Heart left ventricle (tissue), 16 donors: ENCODE measurements at regions of chr1 and their contacts with region 1.

Region 1: DNA sequence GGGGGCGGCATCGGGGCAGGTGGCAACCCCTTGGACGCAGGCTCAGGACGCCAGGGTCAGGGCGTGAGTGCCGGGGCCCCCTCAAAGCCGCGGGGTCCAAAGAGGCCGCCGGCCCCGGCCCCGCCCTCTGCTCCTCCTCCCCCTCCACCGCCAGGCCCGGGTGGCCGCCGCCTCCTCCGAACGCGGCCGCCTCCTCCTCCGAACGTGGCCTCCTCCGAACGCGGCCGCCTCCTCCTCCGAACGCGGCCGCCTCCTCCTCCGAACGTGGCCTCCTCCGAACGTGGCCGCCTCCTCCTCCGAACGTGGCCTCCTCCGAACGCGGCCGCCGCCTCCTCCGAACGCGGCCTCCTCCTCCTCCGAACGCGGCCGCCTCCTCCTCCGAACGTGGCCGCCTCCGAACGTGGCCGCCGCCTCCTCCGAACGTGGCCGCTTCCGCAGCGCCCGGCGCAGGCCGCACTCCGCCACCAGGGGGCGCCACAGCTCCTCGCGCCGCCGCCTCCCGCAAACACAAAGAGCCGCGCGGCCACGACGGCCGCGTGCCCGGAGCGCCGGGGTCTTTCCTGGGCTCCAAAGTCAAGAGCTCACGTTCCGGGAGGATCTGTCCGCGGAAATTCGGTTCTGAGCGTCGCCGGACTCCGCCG is 19.3 kb upstream of the SAMD11 start:
- DNase-seq: peak; percentile 68 to 91 (median 78)
- ATAC-seq: peak in 3 of 4 donors; percentile 72 to 86 (median 81)
- H3K4me3 ChIP-seq: peak overlapping the region in 11 of 12 donors; percentile 4 to 57 (median 45)
- H3K27ac ChIP-seq: peak overlapping the region in 2 of 12 donors; percentile 35 to 53
- H3K4me1 ChIP-seq: peaks cover 0 to 28% (median 11%) of the 10 kb centered on the region in 12 donors
- H3K27me3 ChIP-seq: peaks cover 0 to 18% (median 5%) of the 10 kb centered on the region in 9 donors
- CTCF ChIP-seq: peak; percentile 78 to 98 (median 92)
- POLR2A ChIP-seq: no peak

Region 2: DNA sequence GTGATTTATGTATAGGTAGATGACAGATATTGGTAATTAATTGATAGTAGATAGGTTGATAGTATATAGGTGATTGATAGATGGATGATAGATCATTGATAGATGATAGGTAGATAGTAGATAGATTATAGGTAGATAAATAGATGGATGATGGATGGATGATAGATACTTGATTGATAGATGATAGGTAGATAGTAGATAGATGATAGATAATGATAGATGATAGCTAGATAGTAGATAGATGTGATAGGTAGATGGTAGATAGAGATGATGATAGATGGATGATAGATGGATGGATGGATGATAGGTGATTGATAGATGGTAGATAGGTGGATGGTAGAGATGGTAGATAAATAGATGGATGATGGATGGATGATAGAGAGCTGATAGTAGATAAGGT is 42.7 kb before region 1 on chr1:
- intact Hi-C with region 1: no loop called
- DNase-seq: no peak
- ATAC-seq: no peak
- H3K4me3 ChIP-seq: no peak overlapping the region
- H3K27ac ChIP-seq: no peak overlapping the region
- H3K4me1 ChIP-seq: peaks cover 0 to 31% (median 10%) of the 10 kb centered on the region in 12 donors
- H3K27me3 ChIP-seq: peaks cover 0 to 3% (median 0%) of the 10 kb centered on the region in 9 donors
- CTCF ChIP-seq: no peak
- POLR2A ChIP-seq: no peak

Region 3: GRCh38 chr1:938088-938683 is 33.8 kb after region 1 on chr1:
- intact Hi-C with region 1: loop called in 4 of 10 experiments (anchors 1 to 2 kb)
- DNase-seq: peak in 1 of 5 donors; percentile 57
- ATAC-seq: peak; percentile 30 to 75 (median 58)
- H3K4me3 ChIP-seq: no peak overlapping the region
- H3K27ac ChIP-seq: no peak overlapping the region
- H3K4me1 ChIP-seq: peaks cover 10 to 56% (median 39%) of the 10 kb centered on the region in 12 donors
- H3K27me3 ChIP-seq: peaks cover 8 to 88% (median 61%) of the 10 kb centered on the region in 9 donors
- CTCF ChIP-seq: peak in 11 of 12 donors; percentile 12 to 51 (median 41)
- POLR2A ChIP-seq: no peak

Region 4: DNA sequence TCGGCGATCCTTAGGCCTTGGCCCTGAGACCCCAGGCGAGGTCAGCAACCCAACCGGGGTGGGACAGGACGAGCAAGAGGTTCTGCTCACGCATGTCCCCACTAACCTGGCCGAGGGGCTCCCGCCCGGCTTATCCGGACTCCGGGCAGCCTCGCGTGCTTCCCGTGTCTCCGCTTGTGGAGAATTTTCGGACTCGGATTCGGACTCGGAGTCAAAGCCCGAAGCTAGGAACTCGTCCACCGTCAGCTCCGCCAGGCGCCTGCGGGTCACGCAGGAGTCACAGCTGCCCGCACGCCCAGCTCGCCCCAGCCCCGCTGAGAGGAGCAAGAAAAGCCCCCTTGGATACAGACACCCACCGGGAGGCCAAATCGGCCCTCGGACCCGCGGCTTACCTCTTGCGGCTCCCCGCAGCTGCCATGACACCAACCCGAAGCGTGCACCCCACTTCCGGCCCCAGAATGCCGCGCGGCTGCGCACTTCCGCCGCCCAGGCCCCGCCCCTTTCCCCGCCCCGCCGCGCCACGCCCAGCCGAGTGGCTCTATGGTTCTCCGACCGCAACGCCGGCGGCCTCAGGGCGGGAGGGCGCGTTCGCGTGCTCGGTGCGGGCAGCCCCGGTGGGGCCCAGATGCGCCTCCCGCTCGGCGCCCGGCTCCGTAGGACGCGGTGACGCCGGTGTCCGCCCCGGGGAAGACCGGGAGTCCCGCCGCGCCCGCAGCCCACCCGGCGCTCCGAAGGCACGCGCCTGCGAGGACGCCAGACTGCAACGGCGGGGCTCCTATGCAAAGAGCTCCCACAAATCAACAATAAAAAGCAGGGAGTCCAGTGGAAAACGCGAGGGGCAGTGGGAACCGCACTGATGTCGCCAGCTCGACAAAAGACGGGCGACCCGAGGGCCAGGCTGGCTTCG is 54.6 kb after region 1 on chr1 and contains the start of gene NOC2L:
- intact Hi-C with region 1: loop called in 3 of 10 experiments (anchors 5 to 10 kb)
- DNase-seq: peak; percentile 93 to 97 (median 94)
- ATAC-seq: peak; percentile 76 to 95 (median 94)
- H3K4me3 ChIP-seq: peak within 1 kb of the TSS; percentile 83 to 100 (median 95)
- H3K27ac ChIP-seq: peak within 1 kb of the TSS in 9 of 12 donors; percentile 41 to 80 (median 65)
- H3K4me1 ChIP-seq: peaks cover 0 to 34% (median 22%) of the 10 kb centered on the region in 12 donors
- H3K27me3 ChIP-seq: no peaks in the 10 kb centered on the region
- CTCF ChIP-seq: no peak
- POLR2A ChIP-seq: peak in 1 of 2 donors; percentile 54
- total RNA-seq, gene NOC2L: 36.0 to 63.6 (median 43.3) TPM

Region 5: DNA sequence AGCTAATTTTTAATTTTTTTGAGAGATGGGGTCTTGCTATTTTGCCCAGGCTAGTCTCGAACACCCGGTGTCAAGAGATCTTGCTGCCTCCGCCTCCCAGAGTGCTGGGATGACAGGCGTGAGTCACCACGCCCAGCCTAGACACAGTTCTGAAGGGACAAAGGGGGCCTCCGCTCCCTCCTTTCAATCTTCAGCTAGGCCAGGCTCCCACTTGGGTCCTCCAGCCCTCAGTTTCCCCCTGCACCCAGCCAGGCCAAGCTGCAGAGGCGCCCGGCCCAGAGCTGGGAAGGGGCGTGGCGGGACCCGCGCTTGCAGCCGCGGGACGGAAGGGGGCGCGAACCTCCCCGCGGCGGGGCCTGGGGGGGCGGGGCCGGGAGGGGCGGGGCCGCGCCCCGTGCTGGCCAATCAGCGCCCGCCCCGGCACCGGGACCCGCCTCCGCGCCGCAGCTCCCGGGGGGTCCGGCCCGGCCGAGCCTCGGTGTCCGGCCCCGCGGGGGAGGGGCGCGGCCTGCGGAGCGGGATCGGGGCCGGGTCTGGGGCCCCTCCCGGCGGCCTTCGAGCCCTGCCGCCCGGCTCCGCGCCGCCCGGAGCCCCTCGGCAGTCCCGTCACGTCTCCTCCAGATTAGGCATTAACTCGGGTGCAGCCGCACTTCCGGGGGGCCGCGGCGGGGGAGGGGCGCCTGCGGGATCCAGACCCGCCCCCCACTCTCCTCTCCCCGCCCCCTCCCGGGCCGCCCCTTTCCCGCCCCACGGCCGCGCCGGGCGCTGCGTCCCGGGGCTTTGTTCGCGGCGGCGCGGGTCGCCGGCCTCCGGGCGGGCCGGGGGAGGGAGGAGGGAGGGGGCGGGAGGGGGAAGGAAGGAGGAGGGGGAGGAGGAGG is 114.9 kb after region 1 on chr1:
- intact Hi-C with region 1: no loop called
- DNase-seq: peak; percentile 86 to 93 (median 88)
- ATAC-seq: peak; percentile 51 to 91 (median 86)
- H3K4me3 ChIP-seq: peak overlapping the region; percentile 59 to 99 (median 81)
- H3K27ac ChIP-seq: peak overlapping the region; percentile 88 to 99 (median 96)
- H3K4me1 ChIP-seq: peaks cover 2 to 43% (median 34%) of the 10 kb centered on the region in 12 donors
- H3K27me3 ChIP-seq: peaks cover 0 to 10% (median 0%) of the 10 kb centered on the region in 9 donors
- CTCF ChIP-seq: peak in 11 of 12 donors; percentile 36 to 66 (median 55)
- POLR2A ChIP-seq: no peak